ENCODE measurements at regions of chr6 and their contacts with region 1.

Region 1: DNA sequence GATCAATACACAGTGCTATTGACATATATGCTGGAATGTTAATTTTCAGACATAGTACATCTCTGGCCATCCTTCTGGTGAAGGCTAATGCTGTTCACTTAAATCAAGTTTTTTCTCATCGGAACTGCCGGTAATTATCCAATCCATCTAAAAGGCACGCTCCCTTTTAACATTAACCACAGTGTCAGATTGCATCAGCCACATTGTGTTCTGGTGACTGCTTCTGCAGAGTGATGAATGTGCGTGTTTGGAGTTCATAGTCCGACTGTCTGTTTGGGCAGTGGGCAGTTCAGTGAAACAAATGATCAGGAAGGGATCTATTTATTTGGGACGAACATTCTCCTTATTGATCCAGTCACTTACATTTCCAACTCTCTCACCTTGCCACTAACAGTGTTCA is 49.5 kb downstream of the SOBP start:
- DNase-seq: peak; percentile 62 to 71
- H3K4me3 ChIP-seq: no peak overlapping the region
- H3K4me3 Mint-ChIP-seq: peak overlapping the region; percentile 67
- H3K27ac Mint-ChIP-seq: peak overlapping the region; percentile 92
- H3K4me1 ChIP-seq: peaks cover 32% of the 10 kb centered on the region
- H3K4me1 Mint-ChIP-seq: peaks cover 34% of the 10 kb centered on the region
- H3K27me3 ChIP-seq: no peaks in the 10 kb centered on the region
- H3K27me3 Mint-ChIP-seq: no peaks in the 10 kb centered on the region
- CTCF ChIP-seq: no peak

Region 2: GRCh38 chr6:107361753-107362604 is 177.4 kb before region 1 on chr6:
- CTCF ChIA-PET with region 1: no interaction called
- POLR2A ChIA-PET with region 1: no interaction called
- intact Hi-C with region 1: no loop called
- DNase-seq: peak; percentile 29 to 40
- H3K4me3 ChIP-seq: no peak overlapping the region
- H3K4me3 Mint-ChIP-seq: no peak overlapping the region
- H3K27ac Mint-ChIP-seq: no peak overlapping the region
- H3K4me1 ChIP-seq: no peaks in the 10 kb centered on the region
- H3K4me1 Mint-ChIP-seq: peaks cover 12% of the 10 kb centered on the region
- H3K27me3 ChIP-seq: no peaks in the 10 kb centered on the region
- H3K27me3 Mint-ChIP-seq: no peaks in the 10 kb centered on the region
- CTCF ChIP-seq: no peak

Region 3: GRCh38 chr6:107493158-107494057 is 46.0 kb before region 1 on chr6:
- CTCF ChIA-PET with region 1: no interaction called
- POLR2A ChIA-PET with region 1: no interaction called
- intact Hi-C with region 1: loop called (anchors 1 kb)
- DNase-seq: peak in 1 of 2 experiments; percentile 17
- H3K4me3 ChIP-seq: no peak overlapping the region
- H3K4me3 Mint-ChIP-seq: no peak overlapping the region
- H3K27ac Mint-ChIP-seq: no peak overlapping the region
- H3K4me1 ChIP-seq: no peaks in the 10 kb centered on the region; the same call in 1 of the 2 replicates
- H3K4me1 Mint-ChIP-seq: peaks cover 7% of the 10 kb centered on the region
- H3K27me3 ChIP-seq: peaks cover 3% of the 10 kb centered on the region
- H3K27me3 Mint-ChIP-seq: peaks cover 21% of the 10 kb centered on the region
- CTCF ChIP-seq: no peak